ENCODE measurements at regions of chr12 and their contacts with region 1.

Region 1: DNA sequence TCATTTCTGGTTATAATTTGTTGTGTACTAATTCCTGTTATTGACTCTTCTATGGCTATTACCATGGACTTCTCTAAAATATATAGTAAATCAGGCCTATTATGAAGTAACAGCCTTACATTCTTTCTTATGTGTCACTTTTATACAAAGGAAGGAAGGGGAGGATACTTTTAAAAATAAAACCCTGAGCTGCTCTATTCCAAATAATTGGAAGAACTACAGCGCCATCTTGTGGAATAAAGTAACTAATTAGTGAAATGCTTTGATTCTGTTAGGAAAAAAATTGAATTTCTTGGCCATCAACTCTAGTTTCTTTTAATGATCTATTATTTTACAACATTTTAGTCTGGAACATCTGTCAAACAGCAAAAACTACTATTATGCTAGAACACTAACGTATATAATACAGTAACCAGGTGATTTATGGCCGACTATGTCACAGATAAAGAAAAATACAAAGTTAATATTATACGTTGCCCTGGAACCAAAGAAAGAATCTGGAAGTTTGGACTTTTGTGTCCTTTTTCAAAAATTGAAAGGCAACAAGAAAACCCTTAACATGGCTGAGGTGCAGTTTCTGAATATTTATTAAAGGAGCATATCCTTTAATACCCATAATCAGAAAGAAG is 55.0 kb upstream of the NELL2 start:
- DNase-seq: no peak
- ATAC-seq: no peak
- H3K4me3 ChIP-seq: no peak overlapping the region
- H3K27ac ChIP-seq: no peak overlapping the region
- H3K4me1 ChIP-seq: no peaks in the 10 kb centered on the region
- H3K27me3 ChIP-seq: no peaks in the 10 kb centered on the region
- CTCF ChIP-seq: peak; percentile 59; the same call in 1 of the 2 replicates

Region 2: GRCh38 chr12:44015335-44015941 is 915.6 kb before region 1 on chr12:
- CTCF ChIA-PET with region 1: interaction called, 3 read pairs
- POLR2A ChIA-PET with region 1: no interaction called
- in situ Hi-C with region 1: no loop called
- intact Hi-C with region 1: loop called (anchors 5 kb)
- DNase-seq: peak; percentile 33
- ATAC-seq: no peak
- H3K4me3 ChIP-seq: no peak overlapping the region
- H3K27ac ChIP-seq: no peak overlapping the region
- H3K4me1 ChIP-seq: no peaks in the 10 kb centered on the region
- H3K27me3 ChIP-seq: no peaks in the 10 kb centered on the region
- CTCF ChIP-seq: peak; percentile 66; the same call in 1 of the 2 replicates

Region 3: DNA sequence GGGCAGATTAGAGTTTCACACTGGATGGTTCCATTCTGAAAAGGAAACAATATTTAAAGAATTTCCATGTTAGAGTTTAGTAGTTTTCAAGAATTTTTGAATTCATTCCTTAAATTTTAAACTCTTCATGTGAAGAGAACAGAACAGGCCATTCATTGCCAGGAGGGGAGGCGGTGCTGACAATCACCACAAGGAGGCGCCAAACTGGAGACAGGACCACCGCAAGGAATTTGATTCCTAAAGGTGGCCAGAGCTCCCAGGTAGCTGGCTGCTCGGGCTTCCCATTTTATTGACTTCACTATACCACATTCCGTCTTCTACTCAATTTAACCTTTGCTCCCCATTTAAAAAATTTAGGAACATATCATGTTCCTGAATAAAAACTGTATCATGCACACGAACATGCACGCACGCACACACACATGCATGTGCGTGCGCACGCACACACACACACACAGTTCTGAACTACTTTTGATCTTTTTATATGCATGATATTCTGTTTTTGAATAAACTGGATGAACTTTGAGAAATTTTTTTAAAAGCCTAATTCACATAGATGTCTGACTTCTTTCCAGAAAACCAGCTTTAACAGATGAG is 156.2 kb before region 1 on chr12:
- CTCF ChIA-PET with region 1: no interaction called
- POLR2A ChIA-PET with region 1: no interaction called
- in situ Hi-C with region 1: no loop called
- intact Hi-C with region 1: loop called (anchors 5 kb)
- DNase-seq: peak; percentile 4
- ATAC-seq: no peak
- H3K4me3 ChIP-seq: no peak overlapping the region
- H3K27ac ChIP-seq: no peak overlapping the region
- H3K4me1 ChIP-seq: no peaks in the 10 kb centered on the region
- H3K27me3 ChIP-seq: no peaks in the 10 kb centered on the region
- CTCF ChIP-seq: peak; percentile 83

Region 4: GRCh38 chr12:44947163-44947562 is 16.1 kb after region 1 on chr12:
- CTCF ChIA-PET with region 1: no interaction called
- POLR2A ChIA-PET with region 1: no interaction called
- in situ Hi-C with region 1: no loop called
- intact Hi-C with region 1: no loop called
- DNase-seq: no peak
- ATAC-seq: no peak
- H3K4me3 ChIP-seq: no peak overlapping the region
- H3K27ac ChIP-seq: no peak overlapping the region
- H3K4me1 ChIP-seq: no peaks in the 10 kb centered on the region
- H3K27me3 ChIP-seq: no peaks in the 10 kb centered on the region; the same call in 1 of the 2 replicates
- CTCF ChIP-seq: no peak

Measured in Panc1 (cell line).